A673 (cell line): ENCODE measurements at regions of chr6 and their contacts with region 1.

Region 1: DNA sequence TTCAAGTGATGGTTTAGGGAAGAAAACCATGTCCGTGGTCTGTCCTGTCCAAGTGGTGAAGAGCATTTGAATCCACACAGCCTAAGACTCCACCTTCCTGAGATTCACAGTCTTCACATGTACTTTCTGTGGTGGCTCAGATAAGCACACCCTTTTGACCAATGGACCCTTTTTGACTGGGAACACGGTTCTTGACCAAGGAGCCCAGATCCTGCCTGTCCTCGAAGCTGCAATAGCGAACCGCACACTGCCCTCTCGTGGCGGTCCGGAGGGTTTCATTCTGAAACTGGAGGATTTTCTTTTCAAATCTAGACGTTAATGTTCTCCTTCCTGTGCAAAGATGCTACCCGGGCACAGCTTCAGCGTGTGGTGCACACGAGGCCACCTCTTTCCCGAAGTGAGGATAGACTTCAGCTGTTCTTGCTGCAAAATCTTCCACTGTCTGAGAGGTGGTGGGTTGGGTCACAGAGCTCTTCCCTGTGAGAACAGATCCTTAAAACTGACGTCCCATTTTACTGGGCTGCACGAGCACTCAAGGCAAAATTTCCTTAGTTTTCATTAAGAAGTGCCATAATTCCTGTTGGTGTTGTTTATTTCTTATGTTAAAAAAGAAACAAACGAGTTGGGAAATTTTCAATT is 90.5 kb downstream of the SYNJ2 start:
- DNase-seq: peak; percentile 71
- H3K4me3 ChIP-seq: no peak overlapping the region
- H3K27ac ChIP-seq: no peak overlapping the region
- H3K4me1 ChIP-seq: no peaks in the 10 kb centered on the region
- H3K27me3 ChIP-seq: no peaks in the 10 kb centered on the region
- CTCF ChIP-seq: peak; percentile 88

Region 2: GRCh38 chr6:157314705-157315321 is 757.4 kb before region 1 on chr6:
- CTCF ChIA-PET with region 1: no interaction called
- POLR2A ChIA-PET with region 1: no interaction called
- intact Hi-C with region 1: loop called (anchors 10 kb)
- DNase-seq: peak; percentile 78
- H3K4me3 ChIP-seq: no peak overlapping the region
- H3K27ac ChIP-seq: no peak overlapping the region
- H3K4me1 ChIP-seq: no peaks in the 10 kb centered on the region
- H3K27me3 ChIP-seq: no peaks in the 10 kb centered on the region
- CTCF ChIP-seq: peak; percentile 88

Region 3: GRCh38 chr6:157688960-157689599 is 383.1 kb before region 1 on chr6:
- CTCF ChIA-PET with region 1: no interaction called
- POLR2A ChIA-PET with region 1: no interaction called
- intact Hi-C with region 1: no loop called
- DNase-seq: peak; percentile 14
- H3K4me3 ChIP-seq: no peak overlapping the region
- H3K27ac ChIP-seq: no peak overlapping the region
- H3K4me1 ChIP-seq: no peaks in the 10 kb centered on the region
- H3K27me3 ChIP-seq: peaks cover 12% of the 10 kb centered on the region
- CTCF ChIP-seq: no peak

Region 4: GRCh38 chr6:157756708-157757429 is 315.3 kb before region 1 on chr6:
- CTCF ChIA-PET with region 1: no interaction called
- POLR2A ChIA-PET with region 1: no interaction called
- intact Hi-C with region 1: loop called (anchors 2 kb)
- DNase-seq: peak; percentile 87
- H3K4me3 ChIP-seq: peak overlapping the region; percentile 14
- H3K27ac ChIP-seq: no peak overlapping the region
- H3K4me1 ChIP-seq: peaks cover 4% of the 10 kb centered on the region
- H3K27me3 ChIP-seq: no peaks in the 10 kb centered on the region
- CTCF ChIP-seq: peak; percentile 90

Region 5: DNA sequence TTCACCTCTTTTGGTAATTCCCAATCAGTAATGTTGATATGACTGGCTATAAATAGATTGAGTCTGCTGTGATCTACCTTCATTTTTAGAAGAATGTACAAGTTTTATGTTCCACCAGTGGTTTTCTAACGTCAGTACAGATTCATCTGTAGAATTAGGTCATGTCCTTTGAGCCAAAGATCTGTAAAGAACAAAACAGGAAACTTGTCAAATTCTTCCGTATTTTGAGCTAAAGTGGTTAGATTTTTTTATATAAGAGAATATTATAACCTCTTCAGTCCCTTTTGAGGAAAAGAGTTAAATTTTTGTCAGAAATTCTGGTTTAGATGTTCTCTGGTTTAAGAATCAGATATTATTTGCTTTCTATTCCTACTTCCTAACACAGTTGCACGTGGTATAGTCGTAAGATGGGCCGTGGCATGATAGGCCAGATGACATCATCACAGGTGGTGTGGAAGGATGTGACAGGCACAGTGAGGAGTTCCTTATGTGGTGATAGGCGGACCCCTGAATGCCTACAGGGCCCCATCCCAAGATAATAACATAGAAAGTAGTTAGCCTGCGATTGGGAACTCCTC is 186.9 kb before region 1 on chr6:
- CTCF ChIA-PET with region 1: interaction called, 3 read pairs
- POLR2A ChIA-PET with region 1: no interaction called
- intact Hi-C with region 1: loop called (anchors 5 kb)
- DNase-seq: no peak
- H3K4me3 ChIP-seq: no peak overlapping the region
- H3K27ac ChIP-seq: no peak overlapping the region
- H3K4me1 ChIP-seq: no peaks in the 10 kb centered on the region
- H3K27me3 ChIP-seq: no peaks in the 10 kb centered on the region
- CTCF ChIP-seq: no peak

Region 6: GRCh38 chr6:157989541-157990289 is 82.5 kb before region 1 on chr6:
- CTCF ChIA-PET with region 1: no interaction called
- POLR2A ChIA-PET with region 1: no interaction called
- intact Hi-C with region 1: loop called (anchors 5 kb)
- DNase-seq: peak; percentile 71
- H3K4me3 ChIP-seq: no peak overlapping the region
- H3K27ac ChIP-seq: no peak overlapping the region
- H3K4me1 ChIP-seq: peaks cover 22% of the 10 kb centered on the region
- H3K27me3 ChIP-seq: no peaks in the 10 kb centered on the region
- CTCF ChIP-seq: no peak